PC-9 (cell line): ENCODE measurements at regions of chr14 and their contacts with region 1.

Region 1: DNA sequence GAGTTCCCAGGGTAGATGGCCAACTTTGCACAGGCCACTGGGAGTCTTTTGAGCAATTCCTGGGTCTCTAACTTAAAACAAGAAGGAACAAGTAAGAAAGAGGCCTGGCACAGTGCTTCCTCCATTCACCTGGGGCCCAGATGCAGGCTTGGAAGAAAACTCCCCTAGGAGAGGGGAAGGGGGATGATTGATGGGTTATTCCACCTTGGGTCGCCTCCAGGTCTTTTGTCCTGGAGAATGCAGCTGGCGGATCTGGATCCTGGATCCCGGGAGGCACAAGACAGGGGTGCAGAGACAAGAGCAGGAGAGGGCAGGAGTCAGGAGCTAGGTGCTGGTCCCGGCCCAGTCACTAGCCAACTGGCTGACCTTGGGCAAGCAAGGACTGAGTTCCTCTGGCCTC is 74.5 kb downstream of the ESRRB start:
- DNase-seq: no peak
- H3K4me3 ChIP-seq: no peak overlapping the region
- H3K27ac ChIP-seq: no peak overlapping the region
- H3K4me1 ChIP-seq: no peaks in the 10 kb centered on the region
- H3K27me3 ChIP-seq: peaks cover 91% of the 10 kb centered on the region
- CTCF ChIP-seq: no peak

Region 2: GRCh38 chr14:76063327-76063726 is 387.1 kb before region 1 on chr14:
- CTCF ChIA-PET with region 1: no interaction called
- POLR2A ChIA-PET with region 1: interaction called, 10 read pairs
- intact Hi-C with region 1: no loop called
- DNase-seq: no peak
- H3K4me3 ChIP-seq: no peak overlapping the region
- H3K27ac ChIP-seq: no peak overlapping the region
- H3K4me1 ChIP-seq: no peaks in the 10 kb centered on the region
- H3K27me3 ChIP-seq: no peaks in the 10 kb centered on the region
- CTCF ChIP-seq: no peak

Region 3: GRCh38 chr14:77565289-77565993 is 1115.0 kb after region 1 on chr14:
- CTCF ChIA-PET with region 1: no interaction called
- POLR2A ChIA-PET with region 1: no interaction called
- intact Hi-C with region 1: no loop called
- DNase-seq: no peak
- H3K4me3 ChIP-seq: no peak overlapping the region
- H3K27ac ChIP-seq: 0 out of 2 replicates have a peak overlapping the region, but pooled peaks have one; percentile 7
- H3K4me1 ChIP-seq: no peaks in the 10 kb centered on the region
- H3K27me3 ChIP-seq: no peaks in the 10 kb centered on the region
- CTCF ChIP-seq: no peak